Posterior vena cava (tissue), 2 donors: ENCODE measurements at regions of chr7 and their contacts with region 1.

Region 1: DNA sequence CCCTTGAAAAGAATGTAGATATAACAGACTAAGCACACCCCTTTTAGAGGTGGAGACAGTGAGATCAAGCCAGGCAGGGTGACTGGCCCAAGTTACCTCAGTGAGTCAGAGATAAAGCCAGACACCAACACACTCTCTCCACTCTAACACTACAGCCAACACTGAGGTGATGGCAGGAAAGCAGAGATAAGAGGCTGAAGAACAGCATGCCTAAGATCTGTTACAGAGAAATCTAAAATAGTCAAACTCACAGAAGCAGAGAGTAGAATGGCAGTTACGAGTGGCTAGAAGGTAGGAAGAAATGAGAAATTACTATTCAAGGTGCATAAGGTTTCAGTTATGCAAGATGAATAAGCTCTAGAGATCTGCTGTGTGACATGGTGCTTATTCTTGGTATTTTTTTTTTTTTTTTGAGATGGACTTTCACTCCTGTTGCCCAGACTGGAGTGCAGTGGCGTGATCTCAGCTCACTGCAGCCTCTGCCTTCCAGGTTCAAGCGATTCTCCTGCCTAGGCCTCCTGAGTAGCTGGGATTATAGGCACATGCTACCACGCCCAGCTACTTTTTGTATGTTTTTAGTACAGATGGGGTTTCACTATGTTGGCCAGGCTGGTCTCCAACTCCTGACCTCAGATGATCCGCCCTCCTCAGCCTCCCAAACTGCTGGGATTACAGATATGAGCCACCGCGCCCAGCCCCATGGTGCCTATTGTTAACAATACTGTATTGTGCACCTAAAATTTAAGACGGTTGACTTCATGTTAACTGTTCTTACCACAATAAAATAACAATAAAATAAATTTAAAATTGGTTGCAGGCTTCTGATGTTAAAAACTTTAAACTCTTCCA is 28.7 kb downstream of the ICA1 start:
- DNase-seq: no peak

Region 2: GRCh38 chr7:9120331-9120730 is 887.1 kb after region 1 on chr7:
- intact Hi-C with region 1: loop called in 1 of 2 experiments (anchors 10 kb)
- DNase-seq: no peak